RWPE1 (cell line): ENCODE measurements at regions of chr19 and their contacts with region 1.

Region 1: GRCh38 chr19:19495614-19496603 is 19.4 kb downstream of the TSSK6 start:
- DNase-seq: no peak
- H3K27ac ChIP-seq: no peak overlapping the region
- CTCF ChIP-seq: no peak

Region 2: DNA sequence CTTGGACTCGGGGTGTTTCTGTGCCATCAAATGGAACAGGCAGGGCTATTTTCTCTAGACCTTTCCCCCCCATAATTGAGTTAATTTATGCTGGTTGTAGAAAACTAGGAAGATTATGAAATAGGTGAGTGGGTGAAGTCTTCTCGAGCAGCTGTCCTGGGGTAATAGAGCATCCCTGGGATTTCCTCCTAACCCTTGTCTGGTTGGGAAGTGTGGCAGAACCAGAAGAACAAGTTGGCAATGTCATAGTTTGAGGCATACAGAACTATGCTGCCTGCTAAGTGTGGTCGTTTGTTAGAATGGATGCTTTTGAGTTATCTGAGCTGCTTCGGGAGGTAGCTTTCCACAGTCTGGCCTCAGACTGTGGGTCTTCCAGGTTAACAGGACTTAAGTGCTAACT is 86.7 kb before region 1 on chr19:
- CTCF ChIA-PET with region 1: interaction called, 4 read pairs
- POLR2A ChIA-PET with region 1: interaction called, 11 read pairs
- DNase-seq: no peak
- H3K27ac ChIP-seq: no peak overlapping the region
- CTCF ChIP-seq: no peak

Region 3: GRCh38 chr19:19459707-19460251 is 36.1 kb before region 1 on chr19:
- CTCF ChIA-PET with region 1: no interaction called
- POLR2A ChIA-PET with region 1: no interaction called
- DNase-seq: peak; percentile 44
- H3K27ac ChIP-seq: peak overlapping the region; percentile 74
- CTCF ChIP-seq: no peak